Lower lobe of right lung (tissue), 2 donors: ENCODE measurements at regions of chr18 and their contacts with region 1.

Region 1: DNA sequence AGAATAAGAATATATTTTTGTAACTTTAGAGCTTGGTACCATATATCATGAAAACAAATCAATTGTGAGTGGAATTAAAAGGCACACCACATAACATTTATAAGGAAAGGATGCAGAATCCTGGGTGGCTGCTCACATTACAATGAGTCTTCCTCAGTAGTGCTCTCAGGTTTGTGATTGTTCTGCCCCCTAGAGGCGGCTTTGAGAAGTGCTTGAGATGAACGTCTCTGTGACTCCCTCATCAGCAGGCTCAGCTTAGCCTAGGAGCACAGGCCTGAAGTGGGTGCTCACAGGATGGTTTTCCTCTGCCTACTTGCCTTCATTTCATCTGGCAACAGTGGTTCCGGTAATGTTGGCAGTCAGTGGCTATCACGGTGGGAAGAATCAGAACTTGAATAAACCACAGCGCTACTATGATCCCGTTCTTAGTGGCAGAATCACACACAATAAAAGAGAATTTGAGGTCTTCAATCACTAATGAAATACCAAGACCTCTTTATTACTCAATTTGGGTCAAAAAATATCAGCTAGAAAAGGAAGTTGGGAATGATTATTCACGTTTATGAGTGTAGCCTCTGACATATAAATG is 38.1 kb upstream of the B4GALT6 start:
- DNase-seq: peak; percentile 64
- ATAC-seq: peak; percentile 92
- H3K4me3 ChIP-seq: no peak overlapping the region
- H3K27ac ChIP-seq: no peak overlapping the region
- H3K4me1 ChIP-seq: peaks cover 5% of the 10 kb centered on the region
- H3K27me3 ChIP-seq: peaks cover 20% of the 10 kb centered on the region
- CTCF ChIP-seq: peak; percentile 92

Region 2: DNA sequence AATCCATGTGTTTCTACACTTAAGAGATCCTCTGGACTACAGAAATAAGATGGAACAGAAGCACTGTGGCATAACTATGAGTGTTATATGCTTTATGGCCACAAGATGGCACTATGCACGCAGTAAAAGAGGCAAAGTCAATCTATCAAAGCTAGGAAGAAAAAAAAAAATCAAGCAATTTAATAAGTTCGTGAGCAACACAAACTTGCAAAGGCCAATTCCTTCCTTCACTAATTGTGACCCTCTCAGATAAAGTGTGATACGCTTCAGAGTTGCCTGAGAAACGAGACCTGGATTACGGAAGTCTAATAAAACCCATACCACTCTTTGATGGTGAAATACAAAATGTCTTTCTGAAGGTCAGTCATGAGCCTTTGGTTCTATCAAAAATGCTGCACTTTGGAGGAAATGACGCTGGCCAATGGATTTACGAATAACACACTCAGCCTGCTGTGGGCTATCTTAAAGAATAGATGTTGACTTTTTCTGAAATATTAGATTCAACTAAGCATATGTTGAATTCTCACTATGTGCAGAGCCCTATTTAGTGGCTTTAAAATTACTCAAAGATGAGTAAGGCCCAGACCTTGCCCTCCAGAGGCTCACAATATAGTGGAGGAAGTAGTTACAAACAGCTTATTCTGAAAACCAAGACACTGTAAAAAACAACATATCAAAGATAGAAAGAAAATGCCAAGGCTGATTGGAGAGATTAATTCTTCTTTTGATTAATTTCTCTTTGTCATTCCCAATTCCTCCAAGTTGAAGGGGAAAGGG is 166.3 kb before region 1 on chr18:
- intact Hi-C with region 1: loop called (anchors 5 kb)
- DNase-seq: no peak
- ATAC-seq: peak; percentile 78 to 85
- H3K4me3 ChIP-seq: no peak overlapping the region
- H3K27ac ChIP-seq: no peak overlapping the region
- H3K4me1 ChIP-seq: no peaks in the 10 kb centered on the region
- H3K27me3 ChIP-seq: no peaks in the 10 kb centered on the region
- CTCF ChIP-seq: peak; percentile 89